ENCODE measurements at regions of chr9 and their contacts with region 1.

Region 1: GRCh38 chr9:127187231-127187956 is 65.0 kb upstream of the ANGPTL2 start:
- DNase-seq: no peak
- ATAC-seq: no peak
- H3K4me3 ChIP-seq: no peak overlapping the region
- H3K27ac ChIP-seq: no peak overlapping the region
- H3K4me1 ChIP-seq: peaks cover 26% of the 10 kb centered on the region
- H3K27me3 ChIP-seq: no peaks in the 10 kb centered on the region
- CTCF ChIP-seq: no peak
- EP300 ChIP-seq: no peak
- POLR2A ChIP-seq: no peak
- RAD21 ChIP-seq: no peak

Region 2: DNA sequence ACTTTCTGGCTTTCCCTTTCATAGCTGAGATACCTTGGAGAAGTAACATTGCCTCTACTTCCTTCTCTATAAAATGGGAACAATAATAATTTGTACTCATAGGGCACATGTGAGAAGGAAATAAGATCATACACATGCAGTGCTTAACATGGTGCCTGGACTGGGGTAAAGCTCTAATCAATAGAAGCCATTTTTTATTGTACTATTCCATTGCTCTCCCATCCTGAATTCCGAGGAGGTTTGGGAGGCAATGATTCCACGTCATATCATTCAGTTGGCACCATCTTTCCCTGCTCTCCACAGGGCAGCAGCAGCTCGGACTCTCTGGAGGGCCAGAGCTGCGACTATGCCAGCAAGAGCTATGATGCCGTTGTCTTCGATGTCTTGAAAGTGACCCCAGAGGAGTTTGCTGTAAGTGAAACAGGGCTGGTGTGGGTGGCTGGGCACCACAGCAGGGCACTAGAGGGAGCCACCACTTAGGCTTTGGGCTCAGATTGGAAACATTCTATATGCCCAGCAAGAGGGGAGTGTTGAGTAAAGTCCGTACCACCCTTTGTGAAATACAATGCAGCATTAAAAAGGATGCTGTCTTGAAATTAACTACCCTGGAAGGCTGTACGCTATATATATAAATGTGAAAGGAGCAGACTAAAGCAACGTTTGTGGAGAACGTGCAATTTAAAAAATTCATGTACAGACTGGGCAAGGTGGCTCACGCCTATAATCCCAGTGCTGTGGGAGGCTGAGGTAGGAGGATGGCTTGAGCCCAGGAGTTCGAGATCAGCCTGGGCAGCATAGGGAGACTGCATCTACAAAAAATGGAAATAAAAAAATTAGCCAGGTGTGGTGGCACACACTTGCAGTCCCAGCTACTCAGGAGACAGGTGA is 221.6 kb before region 1 on chr9:
- CTCF ChIA-PET with region 1: interaction called, 15 read pairs
- POLR2A ChIA-PET with region 1: interaction called, 6 read pairs
- RAD21 ChIA-PET with region 1: interaction called, 6 read pairs
- SMC1A ChIA-PET with region 1: interaction called, 7 read pairs
- in situ Hi-C with region 1: no loop called
- intact Hi-C with region 1: no loop called
- DNase-seq: no peak
- ATAC-seq: peak; percentile 99
- H3K4me3 ChIP-seq: no peak overlapping the region
- H3K27ac ChIP-seq: no peak overlapping the region
- H3K4me1 ChIP-seq: no peaks in the 10 kb centered on the region
- H3K27me3 ChIP-seq: no peaks in the 10 kb centered on the region
- CTCF ChIP-seq: peak; percentile 82 to 84 (median 83)
- EP300 ChIP-seq: no peak
- POLR2A ChIP-seq: no peak
- RAD21 ChIP-seq: peak; percentile 95

Region 3: DNA sequence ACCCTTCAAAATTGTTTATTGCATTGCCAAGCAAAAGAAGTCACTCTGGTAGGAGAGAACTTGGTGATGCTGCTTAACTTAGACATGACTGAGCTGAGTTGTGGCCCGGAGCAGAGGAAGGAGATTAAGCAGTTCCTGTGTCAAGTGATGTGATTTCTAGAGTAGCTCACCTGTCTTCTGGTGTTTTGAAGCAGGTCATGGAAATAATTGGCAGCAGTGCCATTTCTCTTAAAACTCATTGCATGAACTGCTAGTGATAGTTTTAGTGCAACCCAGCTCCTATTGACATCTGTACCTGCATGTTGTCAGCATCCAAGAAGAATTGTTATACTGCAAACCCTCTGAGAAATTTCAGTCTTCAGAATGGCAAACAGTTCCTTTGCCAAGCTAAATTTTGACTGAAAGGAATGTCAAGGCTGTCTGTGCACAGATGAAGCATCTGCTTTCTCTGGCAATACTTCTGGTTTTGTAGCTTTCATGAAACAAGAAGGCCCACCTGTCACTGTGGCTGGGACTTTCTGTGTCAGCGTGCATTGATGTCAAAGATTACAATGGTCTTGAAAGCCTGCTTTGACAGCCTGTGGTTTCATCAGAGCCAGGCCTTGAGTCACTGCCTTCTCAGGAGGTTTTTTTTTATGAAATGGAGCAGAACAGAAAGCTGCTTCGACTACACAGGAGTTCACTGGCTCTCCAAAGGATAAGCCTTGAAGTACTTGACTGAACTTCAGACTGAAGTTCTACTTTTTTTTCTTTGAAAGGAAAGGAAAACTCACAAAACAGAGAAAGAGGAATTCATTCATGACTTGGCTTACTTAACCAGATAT is 182.2 kb before region 1 on chr9:
- CTCF ChIA-PET with region 1: interaction called, 3 read pairs
- POLR2A ChIA-PET with region 1: interaction called, 11 read pairs
- RAD21 ChIA-PET with region 1: interaction called, 57 read pairs
- SMC1A ChIA-PET with region 1: interaction called, 51 read pairs
- in situ Hi-C with region 1: no loop called
- intact Hi-C with region 1: loop called (anchors 1 kb)
- DNase-seq: peak; percentile 98
- ATAC-seq: peak; percentile 85
- H3K4me3 ChIP-seq: peak overlapping the region; percentile 4; the same call in 1 of the 2 replicates
- H3K27ac ChIP-seq: peak overlapping the region; percentile 77
- H3K4me1 ChIP-seq: peaks cover 54% of the 10 kb centered on the region
- H3K27me3 ChIP-seq: no peaks in the 10 kb centered on the region
- CTCF ChIP-seq: no peak
- EP300 ChIP-seq: peak; percentile 99
- POLR2A ChIP-seq: no peak
- RAD21 ChIP-seq: peak; percentile 32

Region 4: GRCh38 chr9:127065592-127065991 is 121.8 kb before region 1 on chr9:
- CTCF ChIA-PET with region 1: interaction called, 5 read pairs
- POLR2A ChIA-PET with region 1: interaction called, 5 read pairs
- RAD21 ChIA-PET with region 1: interaction called, 41 read pairs
- SMC1A ChIA-PET with region 1: interaction called, 23 read pairs
- in situ Hi-C with region 1: no loop called
- intact Hi-C with region 1: no loop called
- DNase-seq: no peak
- ATAC-seq: no peak
- H3K4me3 ChIP-seq: no peak overlapping the region
- H3K27ac ChIP-seq: no peak overlapping the region
- H3K4me1 ChIP-seq: no peaks in the 10 kb centered on the region
- H3K27me3 ChIP-seq: no peaks in the 10 kb centered on the region
- CTCF ChIP-seq: no peak
- EP300 ChIP-seq: no peak
- POLR2A ChIP-seq: no peak
- RAD21 ChIP-seq: no peak

Region 5: GRCh38 chr9:127159325-127159801 is 28.0 kb before region 1 on chr9:
- CTCF ChIA-PET with region 1: interaction called, 6 read pairs
- POLR2A ChIA-PET with region 1: interaction called, 270 read pairs
- RAD21 ChIA-PET with region 1: interaction called, 515 read pairs
- SMC1A ChIA-PET with region 1: interaction called, 812 read pairs
- in situ Hi-C with region 1: no loop called
- intact Hi-C with region 1: no loop called
- DNase-seq: no peak
- ATAC-seq: peak; percentile 30; the same call in 2 of the 3 replicates
- H3K4me3 ChIP-seq: no peak overlapping the region
- H3K27ac ChIP-seq: no peak overlapping the region
- H3K4me1 ChIP-seq: peaks cover 27% of the 10 kb centered on the region
- H3K27me3 ChIP-seq: no peaks in the 10 kb centered on the region
- CTCF ChIP-seq: peak in 1 of 3 experiments; percentile 16; a peak in 1 of 6 replicates
- EP300 ChIP-seq: no peak
- POLR2A ChIP-seq: no peak
- RAD21 ChIP-seq: no peak; the same call in 1 of the 2 replicates

Measured in GM12878 (cell line).